ENCODE measurements at regions of chr4 and their contacts with region 1.

Region 1: GRCh38 chr4:183074296-183074990 is 24.6 kb upstream of the WWC2 start:
- DNase-seq: no peak
- H3K4me3 ChIP-seq: no peak overlapping the region
- H3K4me3 Mint-ChIP-seq: no peak overlapping the region
- H3K27ac ChIP-seq: no peak overlapping the region
- H3K27ac Mint-ChIP-seq: no peak overlapping the region
- H3K4me1 ChIP-seq: no peaks in the 10 kb centered on the region
- H3K4me1 Mint-ChIP-seq: peaks cover 0 to 2% (median under 1%) of the 10 kb centered on the region in 4 donors
- H3K27me3 ChIP-seq: no peaks in the 10 kb centered on the region
- H3K27me3 Mint-ChIP-seq: peaks cover 2 to 5% of the 10 kb centered on the region in 2 donors

Region 2: DNA sequence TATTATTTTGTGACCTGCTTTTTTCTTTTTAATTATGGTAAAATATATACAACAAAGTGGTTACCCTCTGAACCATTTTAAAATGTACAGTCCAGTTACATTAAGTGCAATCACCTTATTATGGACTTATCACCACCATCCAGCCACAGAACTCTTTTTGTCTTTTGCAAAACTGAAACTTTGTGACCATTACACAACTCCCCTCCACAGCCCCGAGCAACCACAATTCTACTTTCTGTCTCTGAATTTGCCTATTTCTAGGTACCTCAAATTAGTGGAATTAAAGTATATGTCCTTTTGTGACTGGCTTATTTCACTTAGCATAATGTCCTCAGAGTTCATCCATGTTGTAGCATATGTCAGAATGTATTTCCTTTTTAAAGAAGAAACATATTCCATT is 14.6 kb before region 1 on chr4:
- CTCF ChIA-PET with region 1: interaction called, 17 read pairs
- POLR2A ChIA-PET with region 1: no interaction called
- intact Hi-C with region 1: no loop called
- DNase-seq: no peak
- H3K4me3 ChIP-seq: no peak overlapping the region
- H3K4me3 Mint-ChIP-seq: no peak overlapping the region
- H3K27ac ChIP-seq: no peak overlapping the region
- H3K27ac Mint-ChIP-seq: no peak overlapping the region
- H3K4me1 ChIP-seq: no peaks in the 10 kb centered on the region
- H3K4me1 Mint-ChIP-seq: no peaks in the 10 kb centered on the region
- H3K27me3 ChIP-seq: no peaks in the 10 kb centered on the region
- H3K27me3 Mint-ChIP-seq: peaks cover 9% of the 10 kb centered on the region in 2 donors

Region 3: DNA sequence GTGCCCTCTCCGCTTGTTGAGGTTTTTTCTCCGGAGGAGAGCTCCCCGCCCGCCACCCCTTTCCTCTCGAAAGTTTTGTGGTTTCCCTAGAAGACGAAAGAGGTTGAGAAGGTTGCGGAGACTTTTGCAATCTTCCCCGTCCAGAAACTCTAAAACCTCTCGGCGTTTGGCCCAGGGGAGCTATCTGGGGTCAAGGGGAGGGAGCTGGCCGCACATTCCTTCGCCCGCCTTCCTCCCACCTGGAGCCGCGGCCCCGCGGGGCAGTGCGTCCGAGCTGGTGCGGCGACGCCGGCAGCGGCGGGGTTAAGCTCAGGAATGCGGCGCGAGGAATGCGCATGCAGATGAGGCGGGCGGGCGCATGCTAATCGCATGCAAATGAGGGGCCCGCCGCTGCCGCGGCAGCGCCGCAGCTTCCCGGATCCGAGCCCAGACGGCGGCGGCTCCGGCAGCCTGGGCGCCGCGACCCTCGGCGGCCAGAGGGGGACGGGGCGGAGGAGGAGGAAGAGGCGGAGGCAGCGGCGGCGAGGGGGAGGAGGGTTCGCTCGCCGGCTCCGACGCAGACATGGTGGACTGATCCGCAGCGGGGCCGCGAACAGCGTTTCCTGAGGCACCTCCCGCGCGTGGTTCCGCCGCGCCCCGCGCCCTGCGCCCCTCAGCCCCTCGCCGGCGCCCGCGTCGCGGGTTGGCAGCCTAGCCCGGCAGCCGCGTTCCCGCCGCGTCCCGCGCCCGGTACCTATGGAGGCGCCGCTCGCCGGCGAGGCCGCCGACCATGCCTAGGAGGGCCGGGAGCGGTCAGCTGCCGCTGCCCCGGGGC is 24.5 kb after region 1 on chr4 and contains the start of gene WWC2:
- CTCF ChIA-PET with region 1: interaction called, 16 read pairs
- POLR2A ChIA-PET with region 1: no interaction called
- intact Hi-C with region 1: no loop called
- DNase-seq: peak; percentile 62 to 71 (median 62)
- H3K4me3 ChIP-seq: peak within 1 kb of the TSS; percentile 45 to 52
- H3K4me3 Mint-ChIP-seq: peak within 1 kb of the TSS; percentile 76 to 86 (median 78)
- H3K27ac ChIP-seq: no peak within 1 kb of the TSS
- H3K27ac Mint-ChIP-seq: peak within 1 kb of the TSS in 2 of 7 donors; percentile 19 to 50
- H3K4me1 ChIP-seq: peaks cover 14% of the 10 kb centered on the region
- H3K4me1 Mint-ChIP-seq: peaks cover 8 to 37% (median 21%) of the 10 kb centered on the region in 4 donors
- H3K27me3 ChIP-seq: peaks cover 3% of the 10 kb centered on the region
- H3K27me3 Mint-ChIP-seq: peaks cover 0 to 3% of the 10 kb centered on the region in 2 donors
- total RNA-seq, gene WWC2: 7.3 to 7.6 TPM

Region 4: GRCh38 chr4:183175631-183176232 is 101.3 kb after region 1 on chr4:
- CTCF ChIA-PET with region 1: no interaction called
- POLR2A ChIA-PET with region 1: no interaction called
- intact Hi-C with region 1: no loop called
- DNase-seq: no peak
- H3K4me3 ChIP-seq: no peak overlapping the region
- H3K4me3 Mint-ChIP-seq: no peak overlapping the region
- H3K27ac ChIP-seq: no peak overlapping the region
- H3K27ac Mint-ChIP-seq: no peak overlapping the region
- H3K4me1 ChIP-seq: no peaks in the 10 kb centered on the region
- H3K4me1 Mint-ChIP-seq: peaks cover 0 to 8% (median 3%) of the 10 kb centered on the region in 4 donors
- H3K27me3 ChIP-seq: no peaks in the 10 kb centered on the region
- H3K27me3 Mint-ChIP-seq: peaks cover 0 to 7% of the 10 kb centered on the region in 2 donors

Region 5: DNA sequence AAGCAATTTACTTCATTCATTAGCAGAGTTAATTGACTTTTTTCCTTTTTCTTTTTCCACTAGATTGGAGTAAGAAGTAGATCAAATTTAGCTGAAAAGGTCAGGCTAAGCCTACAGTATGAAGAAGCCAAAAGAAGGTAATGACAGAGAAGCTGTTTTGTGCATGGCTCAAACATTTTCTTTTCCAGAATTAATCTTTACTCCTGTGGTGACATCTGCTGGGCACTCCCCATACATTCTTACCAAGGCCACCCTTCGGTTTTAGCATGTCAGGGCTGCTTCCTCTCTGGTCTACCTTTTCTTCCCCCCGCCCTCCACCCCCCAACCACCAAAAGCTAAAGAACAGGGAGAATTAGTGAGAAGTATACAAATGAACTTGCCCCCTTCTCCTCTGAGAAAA is 175.4 kb after region 1 on chr4:
- CTCF ChIA-PET with region 1: interaction called, 142 read pairs
- POLR2A ChIA-PET with region 1: no interaction called
- intact Hi-C with region 1: loop called (anchors 1 kb)
- DNase-seq: peak in 4 of 5 donors; percentile 3 to 14 (median 6)
- H3K4me3 ChIP-seq: no peak overlapping the region
- H3K4me3 Mint-ChIP-seq: no peak overlapping the region
- H3K27ac ChIP-seq: no peak overlapping the region
- H3K27ac Mint-ChIP-seq: no peak overlapping the region
- H3K4me1 ChIP-seq: no peaks in the 10 kb centered on the region
- H3K4me1 Mint-ChIP-seq: no peaks in the 10 kb centered on the region
- H3K27me3 ChIP-seq: no peaks in the 10 kb centered on the region
- H3K27me3 Mint-ChIP-seq: no peaks in the 10 kb centered on the region

Region 6: DNA sequence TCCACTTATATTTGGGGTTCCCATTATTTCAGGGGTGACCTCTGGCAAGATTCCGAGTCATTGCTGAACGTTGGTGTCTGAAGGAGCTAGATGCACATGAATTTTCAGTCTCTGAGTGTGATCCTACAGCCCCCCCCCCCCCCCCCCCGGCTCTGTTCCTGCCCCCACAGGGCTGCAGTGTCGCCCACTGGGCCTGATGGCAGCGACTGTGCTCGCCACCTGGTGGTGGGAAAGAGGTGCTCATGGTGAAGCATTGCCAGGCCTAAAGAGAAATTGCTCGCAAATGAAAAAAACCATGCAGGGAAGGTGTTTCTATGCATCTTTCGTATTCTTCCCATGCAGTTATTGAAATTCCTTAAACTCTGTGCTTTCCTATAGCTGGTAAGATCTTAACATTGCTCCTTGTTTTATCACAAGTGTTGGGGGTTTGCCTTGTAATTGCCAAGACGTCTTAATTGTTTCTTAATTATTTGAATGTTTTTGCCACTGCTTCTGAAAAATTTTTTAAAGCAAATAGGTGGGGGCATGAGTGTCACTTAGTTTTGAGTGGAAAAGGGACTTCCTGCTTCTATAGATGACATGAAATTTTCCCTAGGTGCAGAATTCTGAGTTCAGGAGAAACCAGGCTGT is 182.4 kb after region 1 on chr4:
- CTCF ChIA-PET with region 1: interaction called, 142 read pairs
- POLR2A ChIA-PET with region 1: no interaction called
- intact Hi-C with region 1: loop called (anchors 1 kb)
- DNase-seq: peak; percentile 15 to 44 (median 20)
- H3K4me3 ChIP-seq: no peak overlapping the region
- H3K4me3 Mint-ChIP-seq: no peak overlapping the region
- H3K27ac ChIP-seq: no peak overlapping the region
- H3K27ac Mint-ChIP-seq: peak overlapping the region in 1 of 7 donors; percentile 22
- H3K4me1 ChIP-seq: peaks cover under 1% of the 10 kb centered on the region
- H3K4me1 Mint-ChIP-seq: peaks cover 0 to under 1% (median under 1%) of the 10 kb centered on the region in 4 donors
- H3K27me3 ChIP-seq: no peaks in the 10 kb centered on the region
- H3K27me3 Mint-ChIP-seq: no peaks in the 10 kb centered on the region

Region 7: DNA sequence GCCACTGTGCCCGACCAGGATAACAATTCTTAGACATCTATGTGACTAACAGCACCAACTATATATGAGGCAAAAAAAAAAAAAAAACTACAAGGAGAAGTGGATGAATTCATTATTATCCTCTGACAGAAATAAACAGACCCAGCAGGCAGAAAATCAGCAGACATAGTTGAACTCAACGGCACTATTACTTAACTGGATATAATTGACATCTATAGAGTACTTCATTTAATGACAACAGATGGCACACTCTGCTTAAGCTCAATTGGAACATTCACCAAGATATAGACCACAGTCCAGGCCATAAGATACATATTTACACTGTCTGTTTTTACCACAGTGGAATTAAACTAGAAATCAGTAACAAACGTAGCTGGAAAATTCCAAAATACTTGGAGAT is 232.4 kb after region 1 on chr4:
- CTCF ChIA-PET with region 1: no interaction called
- POLR2A ChIA-PET with region 1: no interaction called
- intact Hi-C with region 1: no loop called
- DNase-seq: no peak
- H3K4me3 ChIP-seq: no peak overlapping the region
- H3K4me3 Mint-ChIP-seq: no peak overlapping the region
- H3K27ac ChIP-seq: no peak overlapping the region
- H3K27ac Mint-ChIP-seq: peak overlapping the region in 1 of 7 donors; percentile 62
- H3K4me1 ChIP-seq: no peaks in the 10 kb centered on the region
- H3K4me1 Mint-ChIP-seq: no peaks in the 10 kb centered on the region
- H3K27me3 ChIP-seq: no peaks in the 10 kb centered on the region
- H3K27me3 Mint-ChIP-seq: no peaks in the 10 kb centered on the region

Region 8: GRCh38 chr4:183407128-183407585 is 332.7 kb after region 1 on chr4:
- CTCF ChIA-PET with region 1: interaction called, 4 read pairs
- POLR2A ChIA-PET with region 1: no interaction called
- intact Hi-C with region 1: loop called (anchors 1 kb)
- DNase-seq: peak; percentile 86 to 92 (median 87)
- H3K4me3 ChIP-seq: peak overlapping the region; percentile 62 to 73
- H3K4me3 Mint-ChIP-seq: peak overlapping the region; percentile 77 to 93 (median 84)
- H3K27ac ChIP-seq: peak overlapping the region; percentile 49
- H3K27ac Mint-ChIP-seq: peak overlapping the region; percentile 75 to 95 (median 88)
- H3K4me1 ChIP-seq: no peaks in the 10 kb centered on the region
- H3K4me1 Mint-ChIP-seq: peaks cover 5 to 19% (median 11%) of the 10 kb centered on the region in 4 donors
- H3K27me3 ChIP-seq: no peaks in the 10 kb centered on the region
- H3K27me3 Mint-ChIP-seq: no peaks in the 10 kb centered on the region